ENCODE measurements at regions of chr12 and their contacts with region 1.

Region 1: DNA sequence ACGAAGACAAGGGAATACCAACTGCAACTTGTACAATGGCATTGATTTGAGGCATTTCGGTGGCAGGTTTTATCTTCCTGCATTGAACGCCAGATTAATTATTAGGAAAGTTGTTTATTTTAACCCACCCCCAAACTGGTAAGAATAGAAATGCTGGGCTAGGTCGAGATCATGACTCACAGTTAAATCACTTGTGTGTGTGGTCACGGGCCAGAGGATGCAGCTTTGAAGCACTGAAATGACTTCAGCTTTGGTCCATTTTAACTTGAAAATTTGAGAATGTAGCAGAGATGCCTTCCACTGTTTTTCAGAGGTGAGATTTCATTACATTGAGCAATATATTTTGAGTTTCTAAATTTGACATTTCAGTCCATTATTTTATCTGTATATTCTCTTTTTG is 23.6 kb upstream of the KCNH3 start:
- DNase-seq: no peak
- H3K4me3 ChIP-seq: no peak overlapping the region
- H3K4me3 Mint-ChIP-seq: no peak overlapping the region
- H3K27ac ChIP-seq: no peak overlapping the region
- H3K27ac Mint-ChIP-seq: no peak overlapping the region
- H3K4me1 ChIP-seq: no peaks in the 10 kb centered on the region
- H3K4me1 Mint-ChIP-seq: no peaks in the 10 kb centered on the region
- H3K27me3 ChIP-seq: no peaks in the 10 kb centered on the region
- H3K27me3 Mint-ChIP-seq: no peaks in the 10 kb centered on the region

Region 2: GRCh38 chr12:49288412-49288853 is 226.8 kb before region 1 on chr12:
- CTCF ChIA-PET with region 1: interaction called, 10 read pairs
- POLR2A ChIA-PET with region 1: no interaction called
- DNase-seq: peak; percentile 51 to 75 (median 67)
- H3K4me3 ChIP-seq: no peak overlapping the region
- H3K4me3 Mint-ChIP-seq: no peak overlapping the region
- H3K27ac ChIP-seq: no peak overlapping the region
- H3K27ac Mint-ChIP-seq: no peak overlapping the region
- H3K4me1 ChIP-seq: no peaks in the 10 kb centered on the region
- H3K4me1 Mint-ChIP-seq: no peaks in the 10 kb centered on the region
- H3K27me3 ChIP-seq: peaks cover 7% of the 10 kb centered on the region
- H3K27me3 Mint-ChIP-seq: peaks cover 16 to 48% of the 10 kb centered on the region in 2 donors

Region 3: DNA sequence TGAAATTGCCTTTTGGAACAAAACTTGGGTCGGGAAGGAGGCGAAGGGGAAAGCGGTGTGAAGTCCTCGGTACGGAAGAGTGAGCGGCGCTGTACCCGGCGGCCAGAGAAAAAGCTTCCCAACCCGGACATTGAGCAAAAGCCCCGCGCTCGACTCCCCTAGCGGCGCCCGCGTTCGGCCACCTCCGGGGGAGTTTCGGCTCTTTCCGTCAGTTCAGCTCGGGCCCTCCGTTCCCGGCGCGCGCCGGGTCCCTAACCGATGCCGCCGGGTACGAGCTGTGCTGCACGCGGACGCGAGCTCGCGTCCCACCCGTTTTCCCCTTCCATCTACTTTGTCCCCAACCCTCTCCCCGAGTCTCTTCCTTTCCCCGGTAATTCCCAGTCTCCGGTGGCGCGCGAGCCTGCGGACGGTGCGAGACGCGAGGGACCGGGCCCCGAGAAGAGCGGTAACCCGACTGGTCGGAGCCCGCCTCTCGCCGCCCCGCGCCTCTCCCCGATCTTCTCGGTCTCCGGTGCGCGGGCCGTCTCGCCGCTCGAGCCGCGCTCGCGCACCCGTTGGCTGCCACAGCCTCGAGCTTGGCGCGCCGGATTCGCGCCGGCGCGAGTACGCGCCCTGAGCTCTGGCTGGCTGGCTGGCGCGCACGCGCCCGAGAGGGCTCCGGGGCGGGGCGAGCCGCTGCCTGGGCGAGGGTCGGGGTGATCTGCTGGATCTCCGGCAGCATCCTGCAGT is 148.4 kb before region 1 on chr12:
- CTCF ChIA-PET with region 1: interaction called, 172 read pairs
- POLR2A ChIA-PET with region 1: no interaction called
- DNase-seq: peak; percentile 76 to 89 (median 79)
- H3K4me3 ChIP-seq: peak overlapping the region; percentile 82
- H3K4me3 Mint-ChIP-seq: peak overlapping the region; percentile 89 to 98 (median 96)
- H3K27ac ChIP-seq: peak overlapping the region; percentile 91
- H3K27ac Mint-ChIP-seq: peak overlapping the region; percentile 60 to 98 (median 94)
- H3K4me1 ChIP-seq: peaks cover 20% of the 10 kb centered on the region
- H3K4me1 Mint-ChIP-seq: peaks cover 19 to 43% (median 37%) of the 10 kb centered on the region in 3 donors
- H3K27me3 ChIP-seq: no peaks in the 10 kb centered on the region
- H3K27me3 Mint-ChIP-seq: peaks cover 0 to 4% of the 10 kb centered on the region in 2 donors

Region 4: DNA sequence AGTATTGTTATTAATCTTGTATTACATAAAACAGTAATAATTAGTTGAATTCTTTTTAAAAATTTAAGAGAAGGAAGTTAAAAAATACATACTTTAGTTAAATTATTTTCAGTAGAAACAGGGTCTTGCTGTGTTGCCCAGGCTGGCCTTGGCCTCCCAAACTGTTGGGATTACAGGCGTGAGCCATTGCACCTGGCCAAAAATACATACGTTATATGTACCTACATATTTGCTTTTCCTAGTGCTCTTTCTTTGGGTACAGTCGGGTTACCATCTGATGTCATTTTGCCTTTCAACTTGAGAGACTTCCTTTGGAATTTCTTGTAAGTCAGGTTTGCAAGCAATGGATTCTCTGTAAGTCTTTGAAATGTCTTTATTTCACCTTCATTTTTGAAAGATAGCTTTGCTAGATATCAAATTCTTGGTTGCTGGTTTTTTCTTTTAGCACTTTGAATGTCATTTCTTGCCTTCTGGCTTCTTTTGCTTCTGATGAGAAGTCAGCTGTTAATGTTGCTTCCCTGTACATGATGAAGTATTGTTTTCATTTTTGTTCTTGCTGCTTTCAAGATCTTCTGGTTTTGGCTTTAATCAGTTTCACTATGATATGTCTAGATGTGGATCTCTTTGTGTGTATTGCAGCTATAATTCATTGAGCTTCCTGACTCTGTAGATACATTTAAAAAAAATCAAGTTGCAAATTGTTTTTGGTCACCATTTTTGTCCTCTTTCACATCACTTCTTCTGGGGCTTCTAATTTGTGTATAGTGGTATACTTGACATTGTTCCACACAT is 63.6 kb before region 1 on chr12:
- CTCF ChIA-PET with region 1: no interaction called
- POLR2A ChIA-PET with region 1: no interaction called
- DNase-seq: no peak
- H3K4me3 ChIP-seq: no peak overlapping the region
- H3K4me3 Mint-ChIP-seq: no peak overlapping the region
- H3K27ac ChIP-seq: no peak overlapping the region
- H3K27ac Mint-ChIP-seq: no peak overlapping the region
- H3K4me1 ChIP-seq: no peaks in the 10 kb centered on the region
- H3K4me1 Mint-ChIP-seq: peaks cover 0 to 5% (median 3%) of the 10 kb centered on the region in 3 donors
- H3K27me3 ChIP-seq: no peaks in the 10 kb centered on the region
- H3K27me3 Mint-ChIP-seq: no peaks in the 10 kb centered on the region

Region 5: GRCh38 chr12:49588721-49589516 is 73.7 kb after region 1 on chr12:
- CTCF ChIA-PET with region 1: no interaction called
- POLR2A ChIA-PET with region 1: no interaction called
- DNase-seq: no peak
- H3K4me3 ChIP-seq: no peak overlapping the region
- H3K4me3 Mint-ChIP-seq: no peak overlapping the region
- H3K27ac ChIP-seq: no peak overlapping the region
- H3K27ac Mint-ChIP-seq: no peak overlapping the region
- H3K4me1 ChIP-seq: no peaks in the 10 kb centered on the region
- H3K4me1 Mint-ChIP-seq: peaks cover 0 to under 1% (median 0%) of the 10 kb centered on the region in 3 donors
- H3K27me3 ChIP-seq: no peaks in the 10 kb centered on the region
- H3K27me3 Mint-ChIP-seq: no peaks in the 10 kb centered on the region

Measured in CD8-positive, alpha-beta memory T cell (primary cell).